Uterus (tissue), 4 donors: ENCODE measurements at regions of chr14 and their contacts with region 1.

Region 1: DNA sequence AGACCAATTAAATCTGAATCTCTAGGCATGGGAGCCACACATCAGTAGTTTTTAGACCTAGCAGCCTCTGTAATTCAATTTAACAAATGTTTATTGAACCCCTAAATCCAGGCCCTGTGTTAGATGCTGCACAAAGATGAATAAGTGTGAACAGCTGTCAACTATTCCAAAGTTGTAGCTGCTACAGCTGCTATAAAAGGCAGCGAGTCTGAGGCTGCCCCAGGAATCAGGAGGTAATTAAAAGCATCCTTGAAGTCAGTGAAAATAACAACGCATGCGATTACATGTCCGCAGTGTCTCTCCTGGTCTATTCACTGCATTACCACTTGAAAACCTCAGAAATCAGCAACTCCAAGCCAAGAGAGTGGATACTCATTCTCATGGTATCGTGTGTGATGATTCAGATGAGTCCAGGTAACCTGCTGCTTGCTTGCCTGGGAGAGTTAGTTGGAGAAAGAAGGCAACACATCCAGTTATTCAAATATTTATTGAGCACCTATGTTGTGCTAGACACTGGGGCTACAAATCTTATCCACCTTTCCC is 34.9 kb upstream of the DDHD1 start:
- DNase-seq: no peak
- H3K4me3 ChIP-seq: no peak overlapping the region
- H3K27ac ChIP-seq: no peak overlapping the region
- H3K4me1 ChIP-seq: no peaks in the 10 kb centered on the region
- H3K27me3 ChIP-seq: no peaks in the 10 kb centered on the region
- CTCF ChIP-seq: no peak
- POLR2A ChIP-seq: no peak

Region 2: GRCh38 chr14:53126731-53127130 is 61.3 kb before region 1 on chr14:
- intact Hi-C with region 1: loop called (anchors 5 kb)
- DNase-seq: no peak
- H3K4me3 ChIP-seq: no peak overlapping the region
- H3K27ac ChIP-seq: no peak overlapping the region
- H3K4me1 ChIP-seq: no peaks in the 10 kb centered on the region
- H3K27me3 ChIP-seq: no peaks in the 10 kb centered on the region
- CTCF ChIP-seq: no peak
- POLR2A ChIP-seq: no peak